WTC11 (cell line): ENCODE measurements at regions of chr10 and their contacts with region 1.

Region 1: GRCh38 chr10:127755753-127756152 is 18.8 kb downstream of the FOXI2 start:
- DNase-seq: no peak
- ATAC-seq: peak; percentile 77
- H3K4me3 Mint-ChIP-seq: no peak overlapping the region
- H3K27ac Mint-ChIP-seq: no peak overlapping the region
- H3K4me1 Mint-ChIP-seq: peaks cover 6% of the 10 kb centered on the region
- H3K27me3 Mint-ChIP-seq: peaks cover 2% of the 10 kb centered on the region; the same call in 1 of the 2 replicates
- CTCF ChIP-seq: no peak

Region 2: DNA sequence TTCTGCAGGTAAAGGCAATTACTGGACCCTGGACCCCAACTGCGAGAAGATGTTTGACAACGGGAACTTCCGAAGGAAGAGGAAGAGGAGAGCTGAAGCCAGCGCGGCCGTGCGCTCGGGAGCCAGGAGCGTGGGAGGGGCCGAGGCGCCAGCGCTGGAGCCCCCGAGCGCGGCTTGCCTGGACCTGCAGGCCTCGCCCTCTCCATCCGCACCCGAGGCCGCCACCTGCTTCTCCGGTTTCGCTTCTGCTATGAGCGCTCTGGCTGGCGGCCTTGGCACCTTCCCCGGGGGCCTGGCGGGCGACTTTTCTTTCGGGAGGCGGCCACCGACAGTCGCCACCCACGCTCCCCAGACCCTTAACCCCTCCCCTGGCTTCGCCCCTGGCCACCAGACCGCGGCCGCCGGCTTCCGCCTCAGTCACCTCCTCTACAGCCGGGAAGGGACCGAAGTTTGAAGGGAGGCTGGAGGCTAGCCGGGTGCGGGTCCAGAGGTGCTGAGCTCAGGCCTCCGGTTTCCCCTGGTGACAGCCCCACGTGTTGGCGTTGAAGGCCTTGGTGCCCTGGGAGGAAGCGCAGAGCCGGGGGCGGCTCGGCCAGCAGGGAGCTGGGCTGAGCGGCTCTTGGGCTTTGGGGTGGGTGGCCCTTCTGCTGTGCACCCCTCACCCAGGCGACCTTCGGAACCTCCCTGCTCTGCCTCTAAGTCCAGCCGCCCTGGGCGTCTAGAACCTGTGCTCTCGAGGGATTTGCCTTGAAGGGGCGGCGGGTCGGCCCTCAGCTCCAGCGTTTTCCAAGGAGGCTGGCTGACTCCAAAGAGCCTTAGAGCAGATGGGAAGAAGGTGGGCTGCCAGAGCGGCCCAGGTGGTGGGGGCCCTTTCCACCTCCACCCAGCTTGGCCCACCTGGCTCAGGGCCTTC is 17.0 kb before region 1 on chr10:
- CTCF ChIA-PET with region 1: interaction called, 10 read pairs
- POLR2A ChIA-PET with region 1: no interaction called
- DNase-seq: peak; percentile 28
- ATAC-seq: 0 out of 2 replicates have a peak, but pooled peaks have one; percentile 2
- H3K4me3 Mint-ChIP-seq: peak overlapping the region; percentile 70
- H3K27ac Mint-ChIP-seq: no peak overlapping the region
- H3K4me1 Mint-ChIP-seq: peaks cover 16% of the 10 kb centered on the region
- H3K27me3 Mint-ChIP-seq: peaks cover 68% of the 10 kb centered on the region
- CTCF ChIP-seq: no peak